Activated CD8-positive, alpha-beta memory T cell treated with anti-CD3 and anti-CD28 coated beads, Interleukin-2, amount 10 ng/mL, durations not matched to agents 7 days and 5 days (primary cell): ENCODE measurements at regions of chr12 and their contacts with region 1.

Region 1: GRCh38 chr12:14365294-14366208 is at the start of gene ATF7IP:
- DNase-seq: peak; percentile 98
- ATAC-seq: peak; percentile 87
- H3K4me3 Mint-ChIP-seq: peak within 1 kb of the TSS; percentile 80
- H3K27ac Mint-ChIP-seq: peak within 1 kb of the TSS; percentile 97
- H3K4me1 Mint-ChIP-seq: peaks cover 34% of the 10 kb centered on the region
- H3K27me3 Mint-ChIP-seq: peaks cover 3% of the 10 kb centered on the region
- total RNA-seq, gene ATF7IP: 115 to 144 TPM

Region 2: GRCh38 chr12:14167005-14167628 is 198.4 kb before region 1 on chr12:
- CTCF ChIA-PET with region 1: no interaction called
- DNase-seq: peak; percentile 52
- ATAC-seq: no peak
- H3K4me3 Mint-ChIP-seq: no peak overlapping the region
- H3K27ac Mint-ChIP-seq: no peak overlapping the region
- H3K4me1 Mint-ChIP-seq: peaks cover 2% of the 10 kb centered on the region
- H3K27me3 Mint-ChIP-seq: peaks cover 15% of the 10 kb centered on the region

Region 3: GRCh38 chr12:14239350-14239934 is 126.1 kb before region 1 on chr12:
- CTCF ChIA-PET with region 1: interaction called, 19 read pairs
- DNase-seq: peak; percentile 50
- ATAC-seq: peak; percentile 59
- H3K4me3 Mint-ChIP-seq: peak overlapping the region; percentile 66
- H3K27ac Mint-ChIP-seq: peak overlapping the region; percentile 78
- H3K4me1 Mint-ChIP-seq: peaks cover 22% of the 10 kb centered on the region
- H3K27me3 Mint-ChIP-seq: no peaks in the 10 kb centered on the region

Region 4: GRCh38 chr12:14257734-14258574 is 107.6 kb before region 1 on chr12:
- CTCF ChIA-PET with region 1: interaction called, 28 read pairs
- DNase-seq: peak; percentile 98
- ATAC-seq: peak; percentile 82
- H3K4me3 Mint-ChIP-seq: peak overlapping the region; percentile 71
- H3K27ac Mint-ChIP-seq: peak overlapping the region; percentile 100
- H3K4me1 Mint-ChIP-seq: peaks cover 46% of the 10 kb centered on the region
- H3K27me3 Mint-ChIP-seq: no peaks in the 10 kb centered on the region

Region 5: GRCh38 chr12:14303661-14304155 is 61.8 kb before region 1 on chr12:
- CTCF ChIA-PET with region 1: no interaction called
- DNase-seq: no peak
- ATAC-seq: no peak
- H3K4me3 Mint-ChIP-seq: no peak overlapping the region
- H3K27ac Mint-ChIP-seq: no peak overlapping the region
- H3K4me1 Mint-ChIP-seq: no peaks in the 10 kb centered on the region
- H3K27me3 Mint-ChIP-seq: no peaks in the 10 kb centered on the region

Region 6: DNA sequence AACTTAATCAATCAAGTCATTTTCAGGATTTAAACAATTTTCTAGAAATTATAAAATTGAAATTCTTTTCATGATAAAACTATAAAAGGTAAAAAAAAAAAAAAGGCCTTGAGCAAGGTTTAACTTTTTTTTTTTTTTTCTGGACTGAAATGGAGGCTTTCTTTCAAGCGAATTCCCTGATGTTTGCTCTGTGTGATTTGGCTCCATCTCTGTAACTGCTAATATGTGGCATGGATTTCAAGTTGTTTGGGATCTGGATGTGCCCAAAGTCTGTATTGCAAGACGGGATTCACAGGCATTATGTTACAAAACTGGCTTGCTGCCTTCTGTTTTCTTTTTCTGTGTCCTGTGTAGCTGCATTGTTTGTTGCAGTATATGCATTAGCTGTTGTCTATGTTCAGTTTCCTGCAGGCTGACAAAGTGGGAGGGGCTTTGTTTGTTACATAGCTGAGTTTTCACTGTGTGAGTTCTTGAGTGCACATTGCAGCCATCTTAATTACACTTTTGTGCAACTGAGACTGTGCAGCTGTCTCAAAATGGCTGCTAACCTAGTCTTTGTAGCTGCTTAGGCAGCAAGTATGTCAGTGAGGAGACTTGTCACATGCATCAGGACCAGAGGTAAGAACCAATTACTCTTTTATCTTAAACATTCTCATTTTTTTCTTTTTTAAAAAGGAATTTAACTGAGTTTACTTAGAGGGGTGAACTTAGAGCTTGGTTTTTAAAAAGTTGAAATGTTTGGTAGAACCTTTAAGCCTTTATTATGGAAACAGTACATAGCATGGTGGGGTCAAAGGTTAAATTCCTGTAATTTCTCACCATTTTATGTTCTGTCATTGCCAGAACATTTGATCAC is 19.5 kb after region 1 on chr12:
- CTCF ChIA-PET with region 1: interaction called, 61 read pairs
- DNase-seq: peak; percentile 90
- ATAC-seq: peak; percentile 96
- H3K4me3 Mint-ChIP-seq: peak overlapping the region; percentile 79
- H3K27ac Mint-ChIP-seq: peak overlapping the region; percentile 98
- H3K4me1 Mint-ChIP-seq: peaks cover 56% of the 10 kb centered on the region
- H3K27me3 Mint-ChIP-seq: no peaks in the 10 kb centered on the region

Region 7: DNA sequence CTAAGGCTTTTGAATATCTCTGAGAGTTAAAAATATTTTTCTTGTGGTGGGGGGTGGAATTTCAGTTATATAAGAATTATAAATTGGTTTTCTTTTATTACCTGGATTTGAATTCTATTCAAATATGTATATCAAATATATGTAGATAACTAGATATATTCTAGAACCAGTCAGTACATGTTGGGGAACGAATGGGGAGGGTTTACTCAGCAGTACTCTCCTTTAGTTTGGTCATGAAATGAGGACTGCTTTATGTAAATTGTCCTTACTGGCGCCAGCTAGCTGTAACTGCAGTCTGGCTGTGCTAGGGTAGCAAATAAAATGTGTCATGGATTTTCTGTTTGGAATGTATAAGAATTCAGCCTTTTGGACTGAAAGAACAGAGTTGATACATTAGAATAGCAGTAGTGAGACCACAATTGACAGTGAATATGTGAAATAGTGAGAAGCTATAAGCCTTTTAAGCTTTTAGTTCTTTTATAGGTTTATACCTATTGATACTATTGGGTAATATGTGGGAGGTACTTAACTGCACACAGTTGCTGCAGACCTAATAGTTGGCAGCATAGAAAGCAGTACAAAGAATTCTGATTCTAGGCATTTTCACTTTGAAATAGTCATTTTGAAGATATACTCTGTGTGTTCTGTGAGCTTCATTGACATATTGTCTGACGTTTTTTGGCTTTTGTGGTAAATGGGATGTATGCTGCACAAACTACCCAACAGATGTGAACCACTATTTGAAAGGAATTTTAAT is 28.9 kb after region 1 on chr12:
- CTCF ChIA-PET with region 1: interaction called, 61 read pairs
- DNase-seq: peak; percentile 76
- ATAC-seq: peak; percentile 73
- H3K4me3 Mint-ChIP-seq: peak overlapping the region; percentile 74
- H3K27ac Mint-ChIP-seq: peak overlapping the region; percentile 94
- H3K4me1 Mint-ChIP-seq: peaks cover 70% of the 10 kb centered on the region
- H3K27me3 Mint-ChIP-seq: no peaks in the 10 kb centered on the region

Region 8: GRCh38 chr12:14403711-14404196 is 38.2 kb after region 1 on chr12:
- CTCF ChIA-PET with region 1: interaction called, 12 read pairs
- DNase-seq: no peak
- ATAC-seq: peak; percentile 54
- H3K4me3 Mint-ChIP-seq: peak overlapping the region; percentile 76
- H3K27ac Mint-ChIP-seq: peak overlapping the region; percentile 90
- H3K4me1 Mint-ChIP-seq: peaks cover 72% of the 10 kb centered on the region
- H3K27me3 Mint-ChIP-seq: no peaks in the 10 kb centered on the region

Region 9: GRCh38 chr12:14454098-14454907 is 88.8 kb after region 1 on chr12:
- CTCF ChIA-PET with region 1: interaction called, 19 read pairs
- DNase-seq: peak; percentile 70
- ATAC-seq: peak; percentile 89
- H3K4me3 Mint-ChIP-seq: peak overlapping the region; percentile 63
- H3K27ac Mint-ChIP-seq: peak overlapping the region; percentile 88
- H3K4me1 Mint-ChIP-seq: peaks cover 54% of the 10 kb centered on the region
- H3K27me3 Mint-ChIP-seq: no peaks in the 10 kb centered on the region